ENCODE measurements at regions of chr6 and their contacts with region 1.

Region 1: GRCh38 chr6:30483677-30484279 is 5.5 kb upstream of the HLA-E start:
- DNase-seq: peak in 2 of 35 experiments; percentile 48 to 77
- ATAC-seq: no peak
- H3K4me3 ChIP-seq: no peak overlapping the region
- H3K4me3 Mint-ChIP-seq: no peak overlapping the region
- H3K27ac ChIP-seq: no peak overlapping the region
- H3K27ac Mint-ChIP-seq: no peak overlapping the region
- H3K4me1 ChIP-seq: peaks cover 12 to 35% of the 10 kb centered on the region in 2 experiments
- H3K4me1 Mint-ChIP-seq: peaks cover 31 to 43% (median 40%) of the 10 kb centered on the region in 3 donors
- H3K27me3 ChIP-seq: peaks cover 0 to 21% of the 10 kb centered on the region in 2 experiments
- H3K27me3 Mint-ChIP-seq: peaks cover 17 to 31% of the 10 kb centered on the region in 2 donors

Region 2: GRCh38 chr6:30600451-30600961 is 116.7 kb after region 1 on chr6:
- CTCF ChIA-PET with region 1: interaction called, 10 to 26 read pairs
- POLR2A ChIA-PET with region 1: interaction called in 1 of 2 experiments, 3 read pairs
- DNase-seq: no peak
- ATAC-seq: no peak
- H3K4me3 ChIP-seq: no peak overlapping the region
- H3K4me3 Mint-ChIP-seq: no peak overlapping the region
- H3K27ac ChIP-seq: no peak overlapping the region
- H3K27ac Mint-ChIP-seq: peak overlapping the region in 1 of 2 donors; percentile 52
- H3K4me1 ChIP-seq: peaks cover 6 to 26% of the 10 kb centered on the region in 2 experiments
- H3K4me1 Mint-ChIP-seq: peaks cover 21 to 39% (median 22%) of the 10 kb centered on the region in 3 donors
- H3K27me3 ChIP-seq: no peaks in the 10 kb centered on the region
- H3K27me3 Mint-ChIP-seq: no peaks in the 10 kb centered on the region

Region 3: GRCh38 chr6:30730601-30731435 is 247.0 kb after region 1 on chr6:
- CTCF ChIA-PET with region 1: interaction called in 1 of 2 experiments, 12 read pairs
- POLR2A ChIA-PET with region 1: no interaction called
- DNase-seq: peak; percentile 67 to 89 (median 79)
- ATAC-seq: peak; percentile 95 to 97 (median 97)
- H3K4me3 ChIP-seq: peak overlapping the region in 1 of 2 donors; percentile 6
- H3K4me3 Mint-ChIP-seq: peak overlapping the region in 1 of 3 donors; percentile 56
- H3K27ac ChIP-seq: peak overlapping the region; percentile 28
- H3K27ac Mint-ChIP-seq: peak overlapping the region; percentile 71 to 79
- H3K4me1 ChIP-seq: peaks cover 8 to 35% of the 10 kb centered on the region in 2 experiments
- H3K4me1 Mint-ChIP-seq: peaks cover 31 to 46% (median 33%) of the 10 kb centered on the region in 3 donors
- H3K27me3 ChIP-seq: no peaks in the 10 kb centered on the region
- H3K27me3 Mint-ChIP-seq: no peaks in the 10 kb centered on the region

Measured in T-cell (primary cell).